Natural killer cell (primary cell): ENCODE measurements at regions of chr12 and their contacts with region 1.

Region 1: DNA sequence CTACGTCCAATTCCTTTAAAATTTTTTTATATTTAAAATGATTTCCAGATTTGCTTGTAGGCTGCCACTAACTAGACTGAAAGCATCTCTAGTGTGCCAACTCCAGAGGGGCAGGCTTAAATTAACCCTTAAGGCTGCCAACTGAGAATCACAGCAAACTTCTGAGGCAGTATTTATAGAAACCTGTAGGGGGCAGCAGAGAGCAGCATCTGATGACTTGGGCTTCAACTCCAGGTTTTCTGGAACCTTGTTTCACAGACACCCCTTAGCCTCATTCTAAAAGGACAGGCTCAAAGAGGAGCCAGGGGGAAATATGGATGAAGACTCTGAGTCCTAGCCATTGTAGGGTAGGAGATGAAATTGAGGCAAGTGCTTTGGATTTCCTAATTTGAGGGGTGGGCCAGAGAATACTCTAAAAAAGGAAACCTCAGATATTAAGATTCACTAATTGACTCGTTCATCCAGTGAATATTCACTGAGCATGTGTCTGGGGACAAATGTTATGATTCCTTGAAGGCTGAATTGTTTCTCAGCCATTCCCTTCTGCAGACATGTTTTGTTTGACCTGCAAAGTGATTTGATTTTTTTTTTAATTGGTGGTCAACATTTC is 63.3 kb upstream of the HSPB8 start:
- DNase-seq: peak in 1 of 2 donors; percentile 47
- ATAC-seq: peak in 1 of 3 donors; percentile 43
- H3K4me3 ChIP-seq: no peak overlapping the region
- H3K4me3 Mint-ChIP-seq: no peak overlapping the region
- H3K27ac ChIP-seq: no peak overlapping the region
- H3K27ac Mint-ChIP-seq: no peak overlapping the region
- H3K4me1 ChIP-seq: no peaks in the 10 kb centered on the region
- H3K4me1 Mint-ChIP-seq: no peaks in the 10 kb centered on the region
- H3K27me3 ChIP-seq: no peaks in the 10 kb centered on the region
- H3K27me3 Mint-ChIP-seq: peaks cover 0 to 4% of the 10 kb centered on the region in 2 donors
- CTCF ChIP-seq: peak; percentile 76

Region 2: DNA sequence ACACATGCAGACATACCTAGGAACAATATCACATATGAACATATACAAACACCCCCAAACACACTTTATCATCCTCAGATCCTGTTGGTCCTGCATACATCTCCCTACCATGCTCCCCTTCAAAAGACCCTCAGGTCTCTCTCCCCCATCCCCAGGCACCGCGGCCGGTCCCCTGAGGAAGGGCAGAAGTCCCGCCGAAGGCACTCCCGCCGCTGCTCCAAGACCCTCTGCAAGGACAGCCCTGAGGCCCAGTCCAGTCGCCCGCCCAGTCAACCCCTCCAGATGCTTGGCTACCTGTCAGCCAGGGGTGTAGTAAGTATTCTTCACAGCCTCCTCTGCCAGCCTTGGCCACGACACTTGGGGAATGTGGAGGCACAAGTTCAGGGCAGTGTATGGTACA is 15.1 kb after region 1 on chr12:
- intact Hi-C with region 1: no loop called
- DNase-seq: no peak
- ATAC-seq: no peak
- H3K4me3 ChIP-seq: no peak overlapping the region
- H3K4me3 Mint-ChIP-seq: no peak overlapping the region
- H3K27ac ChIP-seq: no peak overlapping the region
- H3K27ac Mint-ChIP-seq: no peak overlapping the region
- H3K4me1 ChIP-seq: no peaks in the 10 kb centered on the region
- H3K4me1 Mint-ChIP-seq: no peaks in the 10 kb centered on the region
- H3K27me3 ChIP-seq: no peaks in the 10 kb centered on the region
- H3K27me3 Mint-ChIP-seq: peaks cover 0 to 3% of the 10 kb centered on the region in 2 donors
- CTCF ChIP-seq: no peak

Region 3: GRCh38 chr12:119412811-119413794 is 297.7 kb after region 1 on chr12:
- intact Hi-C with region 1: loop called (anchors 5 kb)
- DNase-seq: peak in 1 of 2 donors; percentile 36
- ATAC-seq: no peak
- H3K4me3 ChIP-seq: no peak overlapping the region
- H3K4me3 Mint-ChIP-seq: no peak overlapping the region
- H3K27ac ChIP-seq: no peak overlapping the region
- H3K27ac Mint-ChIP-seq: no peak overlapping the region
- H3K4me1 ChIP-seq: no peaks in the 10 kb centered on the region
- H3K4me1 Mint-ChIP-seq: peaks cover 4 to 6% of the 10 kb centered on the region in 2 donors
- H3K27me3 ChIP-seq: no peaks in the 10 kb centered on the region
- H3K27me3 Mint-ChIP-seq: peaks cover 19 to 29% of the 10 kb centered on the region in 2 donors
- CTCF ChIP-seq: peak; percentile 45